ENCODE measurements at regions of chr3 and their contacts with region 1.

Region 1: DNA sequence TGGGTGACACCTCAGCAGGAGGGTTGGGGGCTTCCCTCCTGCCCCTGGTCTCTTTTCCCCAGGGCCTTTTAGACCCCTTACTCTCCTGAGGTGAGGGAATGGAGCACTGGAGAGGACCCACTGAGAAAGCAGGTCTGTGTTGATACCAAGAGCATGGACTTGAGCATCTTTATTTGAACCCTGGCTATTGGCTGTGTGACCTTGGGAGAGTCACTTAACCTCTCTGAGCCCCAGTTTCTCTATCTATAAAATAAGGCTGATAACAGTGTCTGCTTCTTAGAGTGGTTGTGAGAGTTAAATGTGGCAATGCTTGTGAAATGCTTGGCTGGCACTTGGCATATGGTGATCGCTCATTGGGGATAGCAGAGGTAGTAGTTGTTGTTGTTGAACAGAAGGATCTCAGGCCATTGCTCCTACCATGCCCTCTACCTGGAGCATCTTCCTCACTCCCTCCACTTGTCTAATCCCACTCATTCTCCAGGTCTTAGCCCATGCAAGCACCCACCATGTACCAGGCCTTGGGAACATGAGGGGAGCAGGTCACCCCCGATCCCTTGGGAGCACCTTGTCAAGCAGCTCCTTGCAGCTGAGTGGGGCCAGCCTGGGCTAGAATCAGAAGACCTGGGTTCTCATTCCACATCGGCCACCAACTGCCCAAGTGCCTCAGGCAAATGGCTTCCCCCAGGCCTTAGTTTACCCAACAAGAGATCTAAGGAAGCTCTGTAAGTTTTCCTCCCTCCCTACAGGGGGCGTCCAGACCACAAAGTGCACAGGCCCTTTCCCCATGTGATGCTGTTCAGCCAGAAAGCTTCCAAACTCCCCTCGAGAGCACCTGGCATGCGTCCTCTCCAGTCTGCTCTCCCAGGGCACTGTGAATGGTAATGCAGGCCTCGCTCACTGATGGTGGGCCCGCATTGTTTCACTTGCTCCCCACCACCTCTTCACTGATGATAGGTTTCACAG is 96.7 kb downstream of the LSM3 start:
- DNase-seq: no peak
- H3K4me3 ChIP-seq: no peak overlapping the region
- H3K27ac ChIP-seq: no peak overlapping the region
- H3K4me1 ChIP-seq: peaks cover 4 to 31% (median 22%) of the 10 kb centered on the region in 4 experiments
- H3K27me3 ChIP-seq: no peaks in the 10 kb centered on the region; a peak in 1 of 7 replicates
- CTCF ChIP-seq: peak; percentile 54 to 74 (median 67)
- EP300 ChIP-seq: no peak
- POLR2A ChIP-seq: no peak
- RAD21 ChIP-seq: peak; percentile 70 to 82

Region 2: GRCh38 chr3:14154895-14155440 is 120.3 kb before region 1 on chr3:
- CTCF ChIA-PET with region 1: no interaction called
- POLR2A ChIA-PET with region 1: no interaction called
- DNase-seq: no peak
- H3K4me3 ChIP-seq: no peak overlapping the region
- H3K27ac ChIP-seq: no peak overlapping the region
- H3K4me1 ChIP-seq: no peaks in the 10 kb centered on the region
- H3K27me3 ChIP-seq: no peaks in the 10 kb centered on the region
- CTCF ChIP-seq: no peak
- EP300 ChIP-seq: no peak
- POLR2A ChIP-seq: no peak
- RAD21 ChIP-seq: no peak

Region 3: DNA sequence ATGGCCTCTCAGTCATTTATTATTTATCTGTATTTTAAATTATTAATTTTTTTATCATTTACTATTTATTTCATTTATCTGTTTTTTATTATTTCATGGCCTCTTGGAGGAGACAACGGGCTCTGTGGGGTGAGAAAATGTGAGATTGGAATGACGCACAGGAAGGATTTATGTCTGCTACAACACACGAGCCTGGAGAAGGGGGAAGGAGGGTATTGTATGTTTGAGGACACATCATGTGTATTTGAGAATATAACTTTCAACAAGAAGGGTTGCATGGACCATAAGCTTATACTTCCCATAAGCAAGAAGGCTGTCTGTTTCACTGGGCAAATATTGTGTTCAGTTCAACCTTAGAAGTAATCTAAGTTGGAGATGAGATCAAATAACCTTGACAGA is 65.0 kb before region 1 on chr3:
- CTCF ChIA-PET with region 1: no interaction called
- POLR2A ChIA-PET with region 1: no interaction called
- DNase-seq: no peak
- H3K4me3 ChIP-seq: no peak overlapping the region
- H3K27ac ChIP-seq: no peak overlapping the region
- H3K4me1 ChIP-seq: no peaks in the 10 kb centered on the region
- H3K27me3 ChIP-seq: no peaks in the 10 kb centered on the region
- CTCF ChIP-seq: no peak
- EP300 ChIP-seq: no peak
- POLR2A ChIP-seq: no peak
- RAD21 ChIP-seq: no peak

Region 4: GRCh38 chr3:14289590-14290461 is 14.5 kb after region 1 on chr3:
- CTCF ChIA-PET with region 1: interaction called, 75 read pairs
- POLR2A ChIA-PET with region 1: interaction called, 6 read pairs
- DNase-seq: no peak
- H3K4me3 ChIP-seq: no peak overlapping the region
- H3K27ac ChIP-seq: no peak overlapping the region
- H3K4me1 ChIP-seq: peaks cover 4 to 22% (median 14%) of the 10 kb centered on the region in 4 experiments
- H3K27me3 ChIP-seq: 0 out of 7 replicates have a peak, but pooled peaks cover 0 to 2% (median 0%) of the 10 kb centered on the region in 4 experiments
- CTCF ChIP-seq: no peak
- EP300 ChIP-seq: no peak
- POLR2A ChIP-seq: no peak
- RAD21 ChIP-seq: no peak

Region 5: GRCh38 chr3:14329116-14329830 is 54.0 kb after region 1 on chr3:
- CTCF ChIA-PET with region 1: interaction called, 11 read pairs
- POLR2A ChIA-PET with region 1: interaction called, 3 read pairs
- DNase-seq: peak in 1 of 2 experiments; percentile 44
- H3K4me3 ChIP-seq: no peak overlapping the region
- H3K27ac ChIP-seq: no peak overlapping the region
- H3K4me1 ChIP-seq: peaks cover 0 to 15% (median 3%) of the 10 kb centered on the region in 4 experiments; a peak in 6 of 7 replicates
- H3K27me3 ChIP-seq: peaks cover 0 to 4% (median 0%) of the 10 kb centered on the region in 4 experiments; a peak in 1 of 7 replicates
- CTCF ChIP-seq: no peak
- EP300 ChIP-seq: peak in 1 of 2 experiments; percentile 82; a peak in 1 of 3 replicates
- POLR2A ChIP-seq: no peak
- RAD21 ChIP-seq: peak in 1 of 2 experiments; percentile 19; a peak in 1 of 4 replicates

Region 6: GRCh38 chr3:14371573-14372474 is 96.5 kb after region 1 on chr3:
- CTCF ChIA-PET with region 1: interaction called, 43 read pairs
- POLR2A ChIA-PET with region 1: interaction called, 5 read pairs
- DNase-seq: no peak
- H3K4me3 ChIP-seq: no peak overlapping the region
- H3K27ac ChIP-seq: no peak overlapping the region
- H3K4me1 ChIP-seq: peaks cover 2 to 21% (median 5%) of the 10 kb centered on the region in 4 experiments; a peak in 6 of 7 replicates
- H3K27me3 ChIP-seq: no peaks in the 10 kb centered on the region
- CTCF ChIP-seq: no peak
- EP300 ChIP-seq: no peak
- POLR2A ChIP-seq: no peak
- RAD21 ChIP-seq: no peak

Region 7: GRCh38 chr3:14402304-14402811 is 127.1 kb after region 1 on chr3 and contains the start of gene SLC6A6:
- CTCF ChIA-PET with region 1: interaction called, 27 read pairs
- POLR2A ChIA-PET with region 1: interaction called, 10 read pairs
- DNase-seq: peak; percentile 87 to 92
- H3K4me3 ChIP-seq: peak within 1 kb of the TSS; percentile 82 to 99 (median 98)
- H3K27ac ChIP-seq: peak within 1 kb of the TSS; percentile 90
- H3K4me1 ChIP-seq: peaks cover 5 to 25% (median 18%) of the 10 kb centered on the region in 4 experiments
- H3K27me3 ChIP-seq: no peaks in the 10 kb centered on the region
- CTCF ChIP-seq: peak in 2 of 3 experiments; percentile 68 to 70; a peak in 3 of 4 replicates
- EP300 ChIP-seq: no peak
- POLR2A ChIP-seq: peak in 1 of 2 experiments; percentile 93; a peak in 2 of 3 replicates
- RAD21 ChIP-seq: peak; percentile 59 to 65
- total RNA-seq, gene SLC6A6: 140 and 144 TPM in 2 replicates

Measured in H1 (cell line).